ENCODE measurements at regions of chr3 and their contacts with region 1.

Region 1: GRCh38 chr3:149572796-149573414 is 84.9 kb downstream of the WWTR1 start:
- DNase-seq: no peak
- ATAC-seq: no peak
- H3K4me3 Mint-ChIP-seq: no peak overlapping the region
- H3K27ac Mint-ChIP-seq: no peak overlapping the region
- H3K4me1 Mint-ChIP-seq: peaks cover 37% of the 10 kb centered on the region
- H3K27me3 Mint-ChIP-seq: no peaks in the 10 kb centered on the region

Region 2: GRCh38 chr3:149507491-149508324 is 65.2 kb before region 1 on chr3:
- CTCF ChIA-PET with region 1: no interaction called
- DNase-seq: no peak
- ATAC-seq: peak; percentile 60
- H3K4me3 Mint-ChIP-seq: peak overlapping the region; percentile 1
- H3K27ac Mint-ChIP-seq: no peak overlapping the region
- H3K4me1 Mint-ChIP-seq: peaks cover 16% of the 10 kb centered on the region
- H3K27me3 Mint-ChIP-seq: peaks cover 8% of the 10 kb centered on the region

Region 3: GRCh38 chr3:149657926-149658733 is 85.2 kb after region 1 on chr3 and contains the start of gene WWTR1:
- CTCF ChIA-PET with region 1: interaction called, 30 read pairs
- DNase-seq: peak; percentile 79
- ATAC-seq: peak; percentile 85
- H3K4me3 Mint-ChIP-seq: peak within 1 kb of the TSS; percentile 87
- H3K27ac Mint-ChIP-seq: peak within 1 kb of the TSS; percentile 88
- H3K4me1 Mint-ChIP-seq: peaks cover 31% of the 10 kb centered on the region
- H3K27me3 Mint-ChIP-seq: peaks cover 26% of the 10 kb centered on the region
- total RNA-seq, gene WWTR1: 1.8 to 3.8 TPM

Region 4: DNA sequence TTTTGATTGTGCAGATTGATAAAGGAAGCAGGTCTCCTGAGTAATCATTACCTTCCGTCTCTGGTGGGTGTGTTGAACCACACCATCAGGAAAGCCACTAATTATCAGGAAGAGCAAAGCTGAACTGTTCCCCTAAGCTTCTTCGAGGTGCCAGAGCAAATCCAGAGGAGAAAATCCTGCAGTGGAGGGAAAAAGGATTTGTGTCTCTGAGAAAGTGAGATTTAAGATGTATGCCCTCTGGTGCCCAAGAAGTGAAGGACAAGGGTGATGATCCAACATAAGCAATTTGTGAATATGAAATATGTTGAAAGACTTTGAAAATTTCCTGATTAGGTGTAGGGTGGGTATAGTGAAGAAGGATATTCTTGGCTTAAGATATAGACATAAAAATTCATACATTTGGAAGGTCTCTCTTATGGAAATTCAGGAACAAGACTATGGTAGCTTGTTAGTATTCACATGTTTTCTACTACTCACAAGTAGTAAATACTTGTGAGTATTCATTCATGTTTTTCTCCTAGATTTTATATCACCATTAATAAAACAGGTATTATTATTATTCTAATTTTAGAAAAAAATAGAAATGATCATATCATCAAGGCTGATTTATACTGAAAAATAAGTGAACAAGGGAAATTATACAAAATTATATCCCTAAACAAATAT is 144.6 kb after region 1 on chr3:
- CTCF ChIA-PET with region 1: interaction called, 17 read pairs
- DNase-seq: peak; percentile 61
- ATAC-seq: no peak
- H3K4me3 Mint-ChIP-seq: peak overlapping the region; percentile 10
- H3K27ac Mint-ChIP-seq: peak overlapping the region; percentile 47
- H3K4me1 Mint-ChIP-seq: peaks cover 15% of the 10 kb centered on the region
- H3K27me3 Mint-ChIP-seq: no peaks in the 10 kb centered on the region

Region 5: DNA sequence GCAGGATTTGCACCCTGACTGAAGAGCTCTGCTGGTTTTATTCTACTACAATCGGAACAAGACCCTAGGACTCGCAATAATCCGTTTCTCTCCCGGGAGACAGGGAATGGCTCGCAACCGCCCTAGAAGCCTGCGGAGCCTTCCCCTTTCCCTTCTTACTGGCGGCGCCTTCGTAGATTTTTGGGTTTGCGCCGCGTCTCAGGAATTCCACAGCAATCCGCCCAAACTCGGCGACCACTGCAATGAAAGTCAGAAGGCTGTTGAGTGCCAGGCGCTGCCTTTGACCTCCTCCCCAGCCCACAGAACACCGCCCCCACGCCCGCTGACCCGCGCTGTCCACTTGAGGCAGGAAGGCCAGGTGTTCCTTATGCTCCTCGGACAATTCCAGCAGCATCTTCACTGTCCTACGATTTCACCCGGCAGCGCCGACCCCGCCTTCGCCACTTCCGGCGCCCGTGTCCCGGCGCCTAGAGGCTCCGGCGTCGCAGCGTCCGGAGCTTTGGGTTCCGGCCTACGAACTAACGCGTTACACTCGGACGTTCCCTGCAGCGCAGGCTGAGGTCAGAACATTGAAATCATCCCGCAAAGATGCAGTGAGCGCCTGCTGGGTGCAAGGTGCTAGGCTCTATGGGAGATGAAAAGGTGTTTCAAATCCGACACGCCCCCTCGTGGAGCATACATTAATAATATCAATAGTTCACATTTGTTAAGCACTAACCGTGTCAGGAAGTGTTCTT is 179.3 kb after region 1 on chr3 and contains the start of gene COMMD2:
- CTCF ChIA-PET with region 1: interaction called, 13 read pairs
- DNase-seq: peak; percentile 91
- ATAC-seq: peak; percentile 98
- H3K4me3 Mint-ChIP-seq: peak within 1 kb of the TSS; percentile 96
- H3K27ac Mint-ChIP-seq: peak within 1 kb of the TSS; percentile 91
- H3K4me1 Mint-ChIP-seq: peaks cover 28% of the 10 kb centered on the region
- H3K27me3 Mint-ChIP-seq: no peaks in the 10 kb centered on the region
- total RNA-seq, gene COMMD2: 35.5 to 38.9 TPM